Left cardiac atrium (tissue), 4 donors: ENCODE measurements at regions of chr6 and their contacts with region 1.

Region 1: DNA sequence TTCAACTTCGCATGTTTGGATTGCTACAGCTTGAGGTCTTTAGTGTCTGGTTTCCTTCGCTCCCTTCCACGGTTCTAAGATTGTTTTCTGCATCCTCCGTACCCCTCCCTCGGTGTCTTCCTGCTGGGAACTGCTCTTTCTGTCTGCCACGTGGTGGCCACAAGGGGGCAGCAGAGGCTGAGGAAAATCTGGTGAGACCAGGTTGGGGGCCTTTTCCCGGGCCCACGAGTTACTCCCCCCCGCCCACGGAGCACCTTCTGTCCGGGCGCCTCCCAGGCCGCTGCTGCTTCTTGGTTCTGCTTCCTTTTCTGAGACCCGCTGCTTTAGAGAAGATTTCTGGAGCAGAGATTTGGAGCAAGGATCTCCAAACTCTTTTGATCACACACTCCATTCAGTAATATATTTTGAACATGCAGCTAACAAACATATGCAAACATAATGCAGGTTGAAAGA is 21.1 kb upstream of the NOTCH4 start:
- DNase-seq: peak; percentile 91
- ATAC-seq: peak; percentile 93 to 94

Region 2: DNA sequence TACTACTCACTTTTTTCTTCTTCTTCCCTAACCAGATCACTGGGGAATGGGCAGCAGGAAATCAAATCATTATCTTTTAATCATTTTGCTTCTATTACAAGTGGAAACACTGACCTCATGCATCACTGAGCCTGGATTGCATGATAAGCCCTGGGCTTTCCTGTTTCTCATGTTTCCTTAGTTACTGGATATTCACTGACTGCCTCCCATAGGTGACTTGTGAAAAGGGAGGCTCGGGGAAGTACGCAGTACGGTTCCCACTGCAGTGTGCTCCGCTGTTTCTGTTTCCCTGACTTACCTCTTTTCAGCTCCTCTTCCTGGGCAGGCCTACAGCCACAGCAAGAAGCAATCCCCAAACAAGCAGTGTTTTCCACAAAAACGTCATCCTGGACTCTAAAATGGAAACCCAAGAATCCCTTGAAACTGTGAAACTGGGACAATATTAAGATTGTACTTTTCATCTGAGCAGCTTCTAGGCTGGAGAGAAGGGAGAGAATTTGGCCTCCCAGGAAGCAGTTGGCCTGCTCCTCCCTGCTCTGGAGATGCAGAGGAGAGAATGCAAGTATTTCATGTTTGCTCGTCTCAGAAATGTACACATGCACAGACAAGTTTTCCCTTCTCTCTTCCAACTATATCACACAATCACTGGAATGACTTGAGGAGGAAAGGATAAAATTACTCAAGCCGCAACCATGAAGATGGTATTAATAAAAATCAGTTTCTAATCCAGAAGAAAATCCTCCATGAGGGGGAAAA is 148.9 kb after region 1 on chr6:
- intact Hi-C with region 1: loop called in 1 of 2 experiments (anchors 10 kb)
- DNase-seq: no peak
- ATAC-seq: peak; percentile 74 to 84

Region 3: DNA sequence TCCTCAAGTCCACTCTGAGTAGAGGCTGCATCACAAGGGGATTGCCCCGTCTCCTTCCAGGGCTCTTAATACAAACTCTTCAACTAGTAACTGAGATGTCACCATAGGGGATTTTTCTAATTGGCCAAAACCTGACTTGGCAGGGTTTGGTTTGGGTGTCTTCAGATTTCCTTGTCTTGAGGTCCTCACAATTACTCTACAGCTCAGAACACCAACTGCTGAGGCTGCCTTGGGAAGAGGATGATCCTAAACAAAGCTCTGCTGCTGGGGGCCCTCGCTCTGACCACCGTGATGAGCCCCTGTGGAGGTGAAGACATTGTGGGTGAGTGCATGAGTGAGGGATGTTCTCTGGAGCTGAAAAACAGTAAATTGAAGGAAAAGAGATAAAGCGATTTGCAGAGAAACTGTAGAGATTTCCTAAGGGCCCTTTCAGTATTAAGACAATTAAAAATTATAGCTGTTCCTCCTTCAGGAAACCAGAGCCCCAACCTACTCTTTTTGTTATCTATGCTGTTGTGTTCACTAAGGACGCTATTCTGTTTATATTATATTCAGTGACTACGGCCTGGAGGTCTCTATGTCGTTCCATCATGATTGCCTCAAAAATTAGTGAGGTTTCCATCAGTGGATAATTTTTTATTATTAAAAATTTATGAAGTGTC is 392.4 kb after region 1 on chr6 and contains the start of gene HLA-DQA1:
- intact Hi-C with region 1: no loop called
- DNase-seq: no peak
- ATAC-seq: peak; percentile 59 to 67
- total RNA-seq, gene HLA-DQA1: 7.7 to 8.3 TPM

Region 4: DNA sequence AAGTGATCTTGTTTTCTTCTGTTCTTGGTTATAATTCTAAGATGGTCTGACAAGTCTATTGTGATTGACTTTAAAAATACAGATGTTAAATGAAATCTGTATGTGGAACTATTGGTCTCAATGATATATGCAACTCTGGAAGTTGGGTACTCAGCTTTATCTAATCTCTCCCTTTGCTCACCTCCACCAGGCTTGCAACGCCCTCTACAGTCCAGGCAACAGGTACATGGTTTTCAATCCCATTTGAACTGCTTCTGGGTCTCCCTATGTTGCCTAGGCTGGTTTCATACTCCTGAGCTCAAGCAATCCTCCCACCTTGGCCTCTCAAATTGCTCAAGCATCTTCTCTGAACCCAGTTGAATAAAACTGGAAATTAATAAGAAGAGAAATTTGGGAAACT is 447.0 kb after region 1 on chr6:
- intact Hi-C with region 1: loop called in 1 of 2 experiments (anchors 10 kb)
- DNase-seq: peak; percentile 22
- ATAC-seq: no peak

Region 5: DNA sequence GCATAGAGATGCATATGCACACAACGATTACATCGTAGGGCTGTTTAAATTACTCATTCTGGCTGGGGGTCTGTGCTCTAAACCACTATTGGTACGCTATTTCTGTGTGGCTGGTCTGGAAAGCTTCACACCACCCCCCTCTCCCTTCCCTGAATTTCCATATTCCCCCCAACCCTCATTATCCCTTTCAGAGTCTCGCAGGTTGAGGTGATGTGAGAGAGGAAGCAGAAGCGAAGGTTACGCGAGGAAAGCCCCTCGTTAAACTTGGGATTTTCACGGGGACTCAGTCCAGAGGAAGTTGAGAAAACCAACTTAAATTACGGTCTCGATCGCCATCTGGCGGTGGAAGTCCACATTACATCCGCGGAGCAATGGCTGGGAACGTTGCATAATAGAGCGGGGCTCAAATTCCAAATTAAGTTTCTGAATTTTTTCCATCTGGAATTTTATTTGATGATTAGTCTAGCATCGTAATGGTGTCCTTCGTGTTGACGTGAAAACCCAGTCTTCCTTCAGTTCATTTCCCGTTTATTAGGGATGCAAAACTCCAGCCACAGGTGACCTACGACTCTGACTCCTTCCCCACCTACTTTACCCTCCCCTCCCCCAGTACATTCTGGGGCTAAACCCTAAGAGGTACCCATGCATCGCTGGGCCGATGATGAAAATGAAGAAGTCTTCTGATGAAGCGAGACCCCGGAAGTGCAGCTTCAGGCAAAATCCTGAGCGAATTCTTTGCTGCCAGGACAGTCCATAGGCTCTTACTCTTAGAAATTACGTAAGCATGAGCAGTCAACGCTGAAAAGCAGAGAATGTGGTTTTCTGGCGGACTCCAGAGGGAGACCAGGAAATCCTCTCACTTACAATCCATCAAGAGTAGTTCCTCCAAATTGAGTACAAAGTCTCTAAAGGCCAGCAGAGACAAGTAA is 552.1 kb after region 1 on chr6:
- intact Hi-C with region 1: loop called in 1 of 2 experiments (anchors 10 kb)
- DNase-seq: peak; percentile 66
- ATAC-seq: peak; percentile 76 to 86